ENCODE measurements at regions of chr1 and their contacts with region 1.

Region 1: DNA sequence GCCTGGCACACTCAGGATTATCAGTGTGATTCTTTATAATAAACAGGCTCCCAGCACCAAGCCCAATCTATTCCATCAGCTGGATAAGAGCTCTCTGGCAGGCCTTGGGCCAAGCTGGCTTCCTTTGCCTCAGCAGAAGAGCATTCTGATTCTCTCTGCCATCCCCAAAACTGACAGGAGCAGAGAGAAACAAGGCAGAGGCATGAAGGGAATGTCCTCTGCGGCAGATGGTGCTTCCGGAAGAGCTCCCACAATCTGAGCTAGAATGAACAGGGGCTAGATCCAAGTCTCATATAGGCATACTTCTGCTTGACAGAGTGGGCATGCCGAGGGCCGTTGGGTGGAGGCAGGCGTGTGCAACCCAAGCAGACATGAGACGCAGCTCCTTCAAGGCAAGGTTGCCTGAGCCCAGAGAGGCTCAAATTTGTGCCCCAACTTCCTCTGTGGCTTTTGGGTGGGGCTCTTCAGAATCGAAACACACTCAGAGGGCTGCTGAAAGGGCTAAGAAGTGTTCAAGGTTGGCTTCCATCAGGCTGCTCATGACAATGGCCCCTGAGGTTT is 4.0 kb downstream of the CAPN2 start:
- DNase-seq: no peak
- ATAC-seq: no peak
- H3K4me3 ChIP-seq: no peak overlapping the region
- H3K27ac ChIP-seq: no peak overlapping the region
- H3K4me1 ChIP-seq: peaks cover 46% of the 10 kb centered on the region
- H3K27me3 ChIP-seq: no peaks in the 10 kb centered on the region
- CTCF ChIP-seq: no peak
- POLR2A ChIP-seq: no peak

Region 2: GRCh38 chr1:223752721-223753515 is 36.5 kb after region 1 on chr1:
- intact Hi-C with region 1: loop called (anchors 5 kb)
- DNase-seq: no peak
- ATAC-seq: no peak
- H3K4me3 ChIP-seq: no peak overlapping the region
- H3K27ac ChIP-seq: no peak overlapping the region
- H3K4me1 ChIP-seq: peaks cover 12% of the 10 kb centered on the region
- H3K27me3 ChIP-seq: no peaks in the 10 kb centered on the region
- CTCF ChIP-seq: no peak
- POLR2A ChIP-seq: no peak